ENCODE measurements at regions of chr13 and their contacts with region 1.

Region 1: GRCh38 chr13:98445340-98446233 is 131.3 kb downstream of the STK24 start:
- DNase-seq: no peak
- H3K4me3 ChIP-seq: no peak overlapping the region
- CTCF ChIP-seq: peak; percentile 98

Region 2: GRCh38 chr13:98044301-98044700 is 401.3 kb before region 1 on chr13:
- CTCF ChIA-PET with region 1: no interaction called
- POLR2A ChIA-PET with region 1: no interaction called
- DNase-seq: no peak
- H3K4me3 ChIP-seq: no peak overlapping the region
- CTCF ChIP-seq: no peak

Region 3: GRCh38 chr13:98429977-98430736 is 15.4 kb before region 1 on chr13:
- CTCF ChIA-PET with region 1: interaction called, 15 read pairs
- POLR2A ChIA-PET with region 1: no interaction called
- DNase-seq: no peak
- H3K4me3 ChIP-seq: no peak overlapping the region
- CTCF ChIP-seq: no peak

Region 4: DNA sequence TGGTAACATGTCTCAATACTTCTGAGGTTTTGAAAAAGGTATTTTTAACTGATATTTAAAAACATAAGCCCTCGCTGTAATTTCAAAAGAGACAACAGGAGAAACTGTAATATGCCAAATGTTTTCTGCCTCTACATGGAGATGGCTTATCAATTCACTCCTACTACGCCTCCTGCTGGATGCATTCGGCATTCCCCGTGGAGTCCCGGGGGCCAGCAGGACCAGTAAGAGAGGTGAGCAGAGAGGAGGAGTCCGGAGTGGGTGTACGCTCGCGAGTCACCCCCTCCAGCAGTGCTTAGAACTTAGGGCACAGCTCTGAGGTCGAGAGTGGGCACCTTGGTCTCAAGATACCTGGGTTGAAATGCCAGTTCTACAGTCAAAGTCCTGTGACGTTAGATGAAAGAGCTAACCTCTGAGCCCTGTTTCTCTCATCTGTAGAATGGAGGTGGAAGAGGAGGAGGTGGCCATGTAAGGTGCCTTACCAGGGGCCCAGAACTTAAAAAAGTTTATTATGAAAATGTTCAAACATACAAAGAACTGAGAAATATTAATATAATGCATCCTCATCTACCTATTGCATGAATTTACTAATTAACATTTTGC is 21.1 kb after region 1 on chr13:
- CTCF ChIA-PET with region 1: interaction called, 26 read pairs
- POLR2A ChIA-PET with region 1: no interaction called
- DNase-seq: no peak
- H3K4me3 ChIP-seq: no peak overlapping the region
- CTCF ChIP-seq: peak; percentile 77

Region 5: DNA sequence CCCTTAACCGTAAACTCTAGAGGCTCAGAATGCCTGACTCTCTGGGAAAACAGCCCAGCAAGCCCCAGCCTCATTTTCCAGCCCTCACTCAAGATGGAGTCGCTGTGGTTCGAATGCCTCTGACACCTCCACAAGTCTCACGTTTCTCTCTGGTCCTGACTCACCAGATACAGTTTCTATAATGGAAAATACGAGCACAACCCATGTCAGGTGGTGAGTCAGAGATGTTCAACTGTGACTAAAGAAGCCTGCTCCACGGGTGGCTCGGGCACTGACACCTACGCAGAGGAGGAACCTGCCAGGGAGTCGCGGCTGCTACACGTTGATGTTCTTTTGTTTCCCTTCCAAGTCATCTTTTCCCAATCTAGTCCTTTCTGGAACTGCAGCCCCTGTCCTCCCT is 218.5 kb after region 1 on chr13:
- CTCF ChIA-PET with region 1: interaction called, 16 read pairs
- POLR2A ChIA-PET with region 1: no interaction called
- DNase-seq: no peak
- H3K4me3 ChIP-seq: no peak overlapping the region
- CTCF ChIP-seq: no peak

Region 6: GRCh38 chr13:98672944-98673545 is 227.5 kb after region 1 on chr13:
- CTCF ChIA-PET with region 1: interaction called, 75 read pairs
- POLR2A ChIA-PET with region 1: no interaction called
- DNase-seq: peak; percentile 19
- H3K4me3 ChIP-seq: no peak overlapping the region
- CTCF ChIP-seq: peak; percentile 63

Measured in AG04449 (cell line).